ENCODE measurements at regions of chrX and their contacts with region 1.

Region 1: GRCh38 chrX:80808160-80808735 is 1.4 kb downstream of the BRWD3 start:
- H3K4me3 Mint-ChIP-seq: peak overlapping the region; percentile 95
- H3K27ac Mint-ChIP-seq: peak overlapping the region; percentile 92
- H3K4me1 Mint-ChIP-seq: no peaks in the 10 kb centered on the region
- H3K27me3 Mint-ChIP-seq: no peaks in the 10 kb centered on the region

Region 2: GRCh38 chrX:80841259-80841658 is 33.0 kb after region 1 on chrX:
- intact Hi-C with region 1: no loop called
- H3K4me3 Mint-ChIP-seq: no peak overlapping the region
- H3K27ac Mint-ChIP-seq: no peak overlapping the region
- H3K4me1 Mint-ChIP-seq: no peaks in the 10 kb centered on the region
- H3K27me3 Mint-ChIP-seq: no peaks in the 10 kb centered on the region

Region 3: DNA sequence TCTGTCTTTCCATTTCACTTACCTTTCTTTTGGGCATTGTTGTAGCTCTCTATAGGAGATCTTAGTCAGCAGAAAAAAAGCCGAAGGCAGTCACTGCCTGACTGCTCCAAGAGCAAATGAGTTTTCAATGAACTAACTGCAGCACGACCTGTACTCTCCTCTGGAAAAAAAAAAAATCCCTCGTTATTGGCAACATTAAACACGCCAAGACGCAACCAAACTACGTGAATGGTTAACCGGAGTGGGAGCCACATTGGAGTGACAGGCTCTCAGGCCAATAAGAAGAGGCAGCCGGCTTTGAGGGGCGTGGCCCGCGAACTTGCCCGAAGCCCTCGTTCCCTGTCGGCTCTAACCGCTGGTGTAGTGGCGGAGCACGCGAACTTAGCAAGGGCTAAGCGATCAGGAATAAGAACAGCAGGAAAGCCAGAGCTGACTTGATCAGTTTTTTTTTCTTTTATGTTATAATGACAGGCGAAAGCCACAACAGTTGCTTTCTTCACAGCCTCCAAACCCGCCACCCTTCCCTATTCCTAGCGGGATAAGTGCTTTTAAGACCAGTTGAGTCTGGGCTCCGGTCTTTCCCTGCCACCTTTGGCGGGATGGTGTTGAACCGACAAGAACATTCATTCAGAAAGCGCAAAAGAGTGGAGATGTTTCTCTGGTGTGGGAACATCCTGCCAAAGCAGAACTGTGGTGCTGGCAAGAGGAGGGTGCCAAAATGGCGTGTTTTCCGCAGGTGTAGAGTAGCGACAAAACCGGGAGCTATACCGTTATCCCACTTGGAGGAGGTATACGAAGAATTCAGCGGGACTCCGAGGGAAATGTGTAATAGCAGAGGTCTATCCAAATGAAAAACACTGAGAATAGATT is 313.5 kb after region 1 on chrX:
- intact Hi-C with region 1: loop called (anchors 2 kb)
- H3K4me3 Mint-ChIP-seq: peak overlapping the region; percentile 96
- H3K27ac Mint-ChIP-seq: peak overlapping the region; percentile 78
- H3K4me1 Mint-ChIP-seq: peaks cover 6% of the 10 kb centered on the region
- H3K27me3 Mint-ChIP-seq: peaks cover 10% of the 10 kb centered on the region

Region 4: DNA sequence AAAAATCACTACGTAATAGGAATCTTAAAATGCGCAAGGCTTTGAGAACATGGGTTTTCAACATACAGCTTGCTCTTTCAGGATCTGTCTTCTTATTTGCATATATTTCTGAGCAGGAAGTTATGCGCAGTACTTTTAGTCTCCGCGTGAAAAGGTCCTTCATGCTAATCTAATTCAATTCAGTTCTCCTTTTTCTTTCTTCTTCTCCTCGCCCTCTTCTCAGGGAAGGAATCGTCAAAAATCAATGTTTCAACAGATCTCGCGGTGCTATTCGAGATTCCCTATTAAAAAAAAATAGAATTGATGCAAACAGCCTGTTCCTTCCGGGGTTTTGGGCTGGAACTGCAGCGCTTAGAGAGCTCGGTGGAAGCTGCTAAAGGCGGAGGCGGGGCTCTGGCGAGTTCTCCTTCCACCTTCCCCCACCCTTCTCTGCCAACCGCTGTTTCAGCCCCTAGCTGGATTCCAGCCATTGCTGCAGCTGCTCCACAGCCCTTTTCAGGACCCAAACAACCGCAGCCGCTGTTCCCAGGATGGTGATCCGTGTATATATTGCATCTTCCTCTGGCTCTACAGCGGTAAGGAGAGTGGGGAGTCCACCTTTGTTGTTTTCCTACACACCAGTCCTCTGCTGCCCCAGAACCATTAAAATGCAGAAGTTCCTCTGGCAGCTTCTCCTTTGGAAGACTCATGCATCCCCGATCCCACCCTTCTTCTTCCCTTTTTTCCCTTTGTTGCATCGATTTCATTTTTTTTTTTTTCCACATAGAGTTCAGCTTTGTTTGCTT is 393.6 kb after region 1 on chrX and contains the starts of genes HMGN5 and SH3BGRL:
- intact Hi-C with region 1: loop called (anchors 5 kb)
- H3K4me3 Mint-ChIP-seq: peak within 1 kb of the TSS; percentile 82
- H3K27ac Mint-ChIP-seq: peak within 1 kb of the TSS; percentile 95
- H3K4me1 Mint-ChIP-seq: peaks cover 34% of the 10 kb centered on the region
- H3K27me3 Mint-ChIP-seq: no peaks in the 10 kb centered on the region

Region 5: GRCh38 chrX:81367291-81367690 is 559.0 kb after region 1 on chrX:
- intact Hi-C with region 1: loop called (anchors 10 kb)
- H3K4me3 Mint-ChIP-seq: no peak overlapping the region
- H3K27ac Mint-ChIP-seq: no peak overlapping the region
- H3K4me1 Mint-ChIP-seq: no peaks in the 10 kb centered on the region
- H3K27me3 Mint-ChIP-seq: no peaks in the 10 kb centered on the region